ENCODE measurements at regions of chr13 and their contacts with region 1.

Region 1: GRCh38 chr13:98875146-98875729 is 102.6 kb downstream of the DOCK9 start:
- DNase-seq: no peak
- ATAC-seq: no peak
- H3K4me3 ChIP-seq: no peak overlapping the region
- H3K27ac ChIP-seq: no peak overlapping the region
- H3K4me1 ChIP-seq: peaks cover 0 to 13% (median 4%) of the 10 kb centered on the region in 12 donors
- H3K27me3 ChIP-seq: no peaks in the 10 kb centered on the region
- CTCF ChIP-seq: no peak
- POLR2A ChIP-seq: no peak

Region 2: DNA sequence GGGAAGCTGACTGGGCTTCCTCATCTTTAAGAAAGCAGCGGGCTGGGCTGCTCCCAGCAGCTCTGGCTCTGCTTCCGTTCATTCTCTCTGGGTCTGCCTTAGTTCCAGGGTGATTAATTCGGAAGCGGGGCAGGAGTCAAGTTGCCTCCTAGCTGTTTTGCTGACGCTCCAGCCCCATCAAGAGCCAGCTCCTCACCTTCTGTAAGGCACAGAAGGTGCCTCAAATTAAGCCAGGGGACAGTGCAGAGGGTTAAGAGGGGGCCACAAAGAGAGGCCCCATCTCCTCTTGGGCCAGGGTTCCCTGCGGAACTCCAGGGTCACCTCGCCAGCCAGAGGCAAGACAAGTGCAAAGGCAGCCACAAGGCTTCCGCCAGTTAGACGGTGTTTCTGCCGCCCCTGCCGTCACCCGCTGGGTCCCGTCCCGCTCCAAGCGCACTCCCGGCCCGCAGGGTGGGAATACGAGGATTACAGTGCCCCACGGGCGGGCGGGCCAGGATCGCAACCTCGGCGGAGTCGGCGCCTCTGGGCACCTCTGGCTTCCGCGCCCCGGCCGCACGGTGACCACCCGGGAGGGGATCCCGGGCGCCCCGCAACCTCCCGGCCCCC is 123.3 kb before region 1 on chr13:
- intact Hi-C with region 1: no loop called
- DNase-seq: no peak
- ATAC-seq: peak in 2 of 4 donors; percentile 47 to 49
- H3K4me3 ChIP-seq: peak overlapping the region; percentile 22 to 46 (median 39)
- H3K27ac ChIP-seq: no peak overlapping the region
- H3K4me1 ChIP-seq: peaks cover 3 to 15% (median 9%) of the 10 kb centered on the region in 12 donors
- H3K27me3 ChIP-seq: peaks cover 15 to 52% (median 37%) of the 10 kb centered on the region in 9 donors
- CTCF ChIP-seq: no peak
- POLR2A ChIP-seq: no peak

Region 3: DNA sequence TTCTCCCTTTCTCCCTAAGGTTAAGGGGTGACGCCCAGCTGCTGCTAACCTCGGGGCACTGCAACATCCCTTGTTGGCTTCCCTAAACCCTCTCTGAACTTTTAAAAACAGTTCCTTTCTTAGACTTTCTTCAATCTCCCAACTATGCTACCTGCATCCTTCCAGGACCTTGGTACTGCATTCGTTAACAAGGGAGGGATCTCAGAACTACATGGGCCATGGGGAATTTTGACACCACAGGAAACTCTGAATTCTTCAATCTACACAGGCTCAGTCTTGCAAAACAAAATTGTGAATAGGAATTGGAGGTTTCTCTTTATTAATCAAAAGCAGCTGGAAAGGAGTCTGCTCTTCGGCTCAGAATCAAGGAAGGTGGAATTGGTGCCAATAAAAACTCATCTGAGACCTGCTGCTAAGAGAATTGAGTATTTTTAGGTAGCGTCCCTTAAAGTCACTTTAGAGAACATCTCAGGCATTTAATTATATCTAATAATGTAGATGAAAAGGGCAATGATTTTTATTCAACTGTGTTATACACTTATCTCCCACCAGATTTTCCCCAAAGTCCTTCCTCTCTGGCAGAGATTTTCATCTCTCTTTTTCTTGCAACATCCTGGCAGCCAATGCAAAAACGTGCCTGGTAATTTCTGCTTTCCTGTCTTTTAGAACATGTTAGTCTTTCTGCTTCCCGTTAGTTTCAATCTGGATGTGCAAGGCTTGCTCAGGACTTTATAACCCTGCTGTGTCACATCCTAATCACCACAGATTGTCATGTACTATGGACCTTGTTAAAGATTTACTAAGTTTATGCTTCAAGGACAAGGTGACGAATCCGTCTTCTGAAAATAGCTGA is 53.6 kb before region 1 on chr13:
- intact Hi-C with region 1: loop called in 1 of 10 experiments (anchors 5 kb)
- DNase-seq: no peak
- ATAC-seq: peak in 3 of 4 donors; percentile 23 to 73 (median 63)
- H3K4me3 ChIP-seq: no peak overlapping the region
- H3K27ac ChIP-seq: peak overlapping the region; percentile 33 to 77 (median 54)
- H3K4me1 ChIP-seq: peaks cover 4 to 51% (median 35%) of the 10 kb centered on the region in 12 donors
- H3K27me3 ChIP-seq: no peaks in the 10 kb centered on the region
- CTCF ChIP-seq: no peak
- POLR2A ChIP-seq: no peak

Region 4: DNA sequence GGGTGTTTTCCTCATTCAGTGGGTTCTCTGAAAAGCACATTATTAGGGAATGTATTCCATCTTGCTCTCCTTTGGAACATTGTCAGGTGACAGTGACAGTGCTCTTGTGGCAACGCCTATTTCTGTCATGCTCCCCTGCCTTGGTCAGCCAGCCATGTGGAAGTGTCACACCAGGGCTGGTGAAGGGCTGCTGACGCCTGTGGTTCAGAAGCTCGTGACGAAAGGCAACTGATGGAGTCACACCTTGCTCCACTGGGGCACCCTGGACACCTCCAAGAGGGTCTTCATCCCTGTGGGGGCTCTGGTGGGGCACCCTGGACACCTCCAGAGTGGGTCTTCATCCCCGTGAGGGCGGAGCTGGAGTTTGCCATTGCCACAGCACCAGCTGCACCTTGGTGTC is 500.9 kb after region 1 on chr13:
- intact Hi-C with region 1: no loop called
- DNase-seq: peak in 1 of 5 donors; percentile 36
- ATAC-seq: peak in 3 of 4 donors; percentile 22 to 64 (median 36)
- H3K4me3 ChIP-seq: no peak overlapping the region
- H3K27ac ChIP-seq: peak overlapping the region in 4 of 12 donors; percentile 5 to 77 (median 24)
- H3K4me1 ChIP-seq: peaks cover 0 to 49% (median 4%) of the 10 kb centered on the region in 12 donors
- H3K27me3 ChIP-seq: no peaks in the 10 kb centered on the region
- CTCF ChIP-seq: no peak
- POLR2A ChIP-seq: no peak